ENCODE measurements at regions of chr21 and their contacts with region 1.

Region 1: GRCh38 chr21:29024474-29025327 is at the start of gene USP16:
- DNase-seq: peak; percentile 100
- ATAC-seq: peak; percentile 97
- H3K4me3 ChIP-seq: peak within 1 kb of the TSS; percentile 65
- H3K27ac ChIP-seq: peak within 1 kb of the TSS; percentile 97
- H3K4me1 ChIP-seq: peaks cover 3 to 13% of the 10 kb centered on the region in 2 experiments; a peak in 1 of 5 replicates
- H3K27me3 ChIP-seq: no peaks in the 10 kb centered on the region
- CTCF ChIP-seq: peak in 2 of 3 experiments; percentile 26 to 29; a peak in 2 of 6 replicates
- EP300 ChIP-seq: no peak; the same call in 1 of the 2 replicates
- POLR2A ChIP-seq: peak; percentile 95
- RAD21 ChIP-seq: 0 out of 4 replicates have a peak, but pooled peaks of 1 of the 2 experiments have one; percentile 5
- polyA plus RNA-seq, gene USP16: 62.8 to 67.4 TPM

Region 2: GRCh38 chr21:28992526-28993292 is 32.0 kb before region 1 on chr21 and contains the start of gene LTN1:
- CTCF ChIA-PET with region 1: no interaction called
- POLR2A ChIA-PET with region 1: interaction called, 19 read pairs
- in situ Hi-C with region 1: no loop called
- intact Hi-C with region 1: loop called (anchors 1 kb)
- DNase-seq: peak; percentile 98 to 100 (median 98)
- ATAC-seq: peak; percentile 93
- H3K4me3 ChIP-seq: peak within 1 kb of the TSS; percentile 91
- H3K27ac ChIP-seq: peak within 1 kb of the TSS; percentile 93
- H3K4me1 ChIP-seq: peaks cover 4 to 8% of the 10 kb centered on the region in 2 experiments; a peak in 4 of 5 replicates
- H3K27me3 ChIP-seq: no peaks in the 10 kb centered on the region; a peak in 1 of 5 replicates
- CTCF ChIP-seq: no peak
- EP300 ChIP-seq: peak; percentile 47; the same call in 1 of the 2 replicates
- POLR2A ChIP-seq: peak; percentile 96
- RAD21 ChIP-seq: no peak; a peak in 1 of 4 replicates
- polyA plus RNA-seq, gene LTN1: 16.6 to 21.8 TPM

Region 3: GRCh38 chr21:29002442-29003144 is 22.1 kb before region 1 on chr21:
- CTCF ChIA-PET with region 1: no interaction called
- POLR2A ChIA-PET with region 1: interaction called, 18 read pairs
- in situ Hi-C with region 1: no loop called
- intact Hi-C with region 1: loop called (anchors 1 kb)
- DNase-seq: peak; percentile 96 to 99 (median 97)
- ATAC-seq: peak; percentile 99
- H3K4me3 ChIP-seq: peak overlapping the region; percentile 49
- H3K27ac ChIP-seq: peak overlapping the region; percentile 88
- H3K4me1 ChIP-seq: peaks cover 6 to 19% of the 10 kb centered on the region in 2 experiments; a peak in 4 of 5 replicates
- H3K27me3 ChIP-seq: no peaks in the 10 kb centered on the region
- CTCF ChIP-seq: no peak
- EP300 ChIP-seq: peak; percentile 43
- POLR2A ChIP-seq: peak; percentile 99
- RAD21 ChIP-seq: no peak

Measured in K562 (cell line).